Right ventricle myocardium inferior (tissue), 1 donor: ENCODE measurements at regions of chr2 and their contacts with region 1.

Region 1: DNA sequence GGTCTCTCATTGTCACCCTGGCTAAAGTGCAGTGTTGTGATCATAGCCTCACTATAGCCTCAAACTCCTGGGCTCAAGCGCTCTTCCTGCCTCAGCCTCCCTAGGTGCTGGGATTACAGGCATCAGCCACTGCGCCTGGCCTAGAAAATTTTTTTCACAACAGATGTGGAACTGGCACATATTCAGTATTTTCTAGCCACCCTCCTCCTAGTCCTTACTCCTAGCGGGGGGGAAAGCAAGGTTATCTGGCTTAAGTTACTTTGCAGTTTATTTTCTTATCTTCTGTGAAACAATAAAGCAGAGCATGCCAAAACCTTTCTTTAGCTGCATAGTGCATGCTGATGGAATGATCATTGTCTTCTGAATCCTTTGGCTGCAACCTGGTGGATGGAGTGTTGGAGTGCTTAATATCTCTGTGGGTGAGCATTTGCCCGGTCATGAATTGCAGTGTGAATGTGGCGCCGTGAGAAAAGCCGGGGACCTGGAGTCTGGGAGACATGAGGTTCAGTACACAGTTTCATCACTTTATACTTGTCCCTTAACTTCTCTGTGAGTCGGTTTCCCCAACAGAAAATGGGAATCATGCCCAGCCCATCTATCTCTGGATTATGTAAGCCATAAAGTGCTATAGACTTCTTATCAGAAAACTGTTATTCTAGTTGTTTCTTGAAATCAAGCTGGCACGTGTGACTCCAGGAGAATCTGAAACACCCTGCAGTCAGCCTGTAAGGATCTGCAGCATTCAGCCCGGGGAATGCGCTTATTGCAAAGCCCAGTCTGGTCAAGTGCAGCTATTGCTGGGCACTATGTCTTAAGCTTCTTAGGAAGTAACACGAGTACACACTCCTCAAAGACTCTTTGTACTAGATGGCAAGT is 38.2 kb upstream of the MAP3K20 start:
- DNase-seq: no peak
- ATAC-seq: peak; percentile 85

Region 2: DNA sequence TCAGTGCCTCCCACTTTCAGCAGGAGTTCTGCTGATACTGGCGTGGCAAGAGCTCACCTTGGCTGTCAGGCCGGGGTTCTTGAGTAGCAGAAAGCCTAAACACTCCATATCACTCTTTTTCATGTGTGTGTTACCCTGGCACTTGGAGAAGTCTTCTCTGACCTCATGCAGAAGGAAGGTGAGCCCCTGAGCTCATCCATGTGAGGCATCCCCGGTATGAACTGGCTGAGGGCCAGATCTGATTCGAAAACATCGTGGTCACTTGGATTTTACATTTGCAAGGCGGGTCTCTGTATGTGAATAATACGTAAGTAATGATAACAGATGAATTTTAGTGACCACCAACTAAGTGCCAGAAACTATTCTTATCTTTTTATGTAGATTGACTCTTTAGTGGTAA is 208.3 kb before region 1 on chr2:
- intact Hi-C with region 1: no loop called
- DNase-seq: no peak
- ATAC-seq: no peak

Region 3: DNA sequence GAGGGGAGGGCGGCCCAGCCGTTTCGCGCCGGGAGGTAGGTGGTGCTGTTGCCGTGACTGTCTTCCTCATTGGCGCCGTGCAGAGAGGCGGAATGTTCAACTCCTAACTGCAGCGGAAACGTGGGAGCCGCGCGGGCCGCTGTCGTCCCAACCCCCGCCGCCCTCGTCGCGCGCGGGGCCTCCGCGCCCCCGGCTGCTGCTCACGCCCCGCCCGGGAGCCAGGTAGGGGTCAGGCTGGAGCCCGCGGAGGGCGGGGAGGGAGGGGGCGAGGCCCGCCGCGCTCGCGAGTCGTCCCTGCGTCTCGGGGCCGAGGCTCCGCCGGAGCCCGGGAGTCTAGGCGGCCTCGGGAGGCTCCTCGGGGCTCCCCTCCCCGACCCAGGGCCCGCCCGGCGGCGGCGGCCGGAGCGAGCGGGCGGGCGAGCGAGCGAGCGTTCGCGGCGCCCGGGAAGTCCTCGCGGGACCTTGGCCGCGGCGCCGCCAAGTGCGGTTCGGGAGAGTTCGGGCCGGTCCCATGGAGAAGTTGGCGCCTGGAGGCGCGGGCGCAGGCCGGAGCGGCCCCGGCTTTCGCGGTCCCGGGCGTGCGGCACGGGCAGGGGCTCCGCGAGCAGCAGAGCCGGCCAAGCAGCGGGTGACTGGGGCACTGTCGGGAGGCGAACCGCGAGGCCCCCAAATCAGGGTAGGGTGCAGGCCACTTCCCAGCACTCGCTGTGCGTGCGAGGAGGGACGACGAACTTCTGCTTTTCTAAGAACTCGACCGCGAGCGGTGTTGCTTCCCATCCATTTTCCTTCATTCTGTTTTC is 38.5 kb after region 1 on chr2 and contains the start of gene MAP3K20:
- intact Hi-C with region 1: loop called (anchors 2 kb)
- DNase-seq: peak; percentile 90
- ATAC-seq: peak; percentile 89
- total RNA-seq, gene MAP3K20: 435 TPM